Endothelial cell of umbilical vein (primary cell): ENCODE measurements at regions of chr5 and their contacts with region 1.

Region 1: GRCh38 chr5:81425569-81425968 is 31.6 kb upstream of the ACOT12 start:
- DNase-seq: peak; percentile 65
- H3K4me3 ChIP-seq: no peak overlapping the region
- H3K27ac ChIP-seq: no peak overlapping the region
- H3K4me1 ChIP-seq: peaks cover 36% of the 10 kb centered on the region
- H3K27me3 ChIP-seq: no peaks in the 10 kb centered on the region
- CTCF ChIP-seq: peak; percentile 26 to 32
- POLR2A ChIP-seq: no peak

Region 2: DNA sequence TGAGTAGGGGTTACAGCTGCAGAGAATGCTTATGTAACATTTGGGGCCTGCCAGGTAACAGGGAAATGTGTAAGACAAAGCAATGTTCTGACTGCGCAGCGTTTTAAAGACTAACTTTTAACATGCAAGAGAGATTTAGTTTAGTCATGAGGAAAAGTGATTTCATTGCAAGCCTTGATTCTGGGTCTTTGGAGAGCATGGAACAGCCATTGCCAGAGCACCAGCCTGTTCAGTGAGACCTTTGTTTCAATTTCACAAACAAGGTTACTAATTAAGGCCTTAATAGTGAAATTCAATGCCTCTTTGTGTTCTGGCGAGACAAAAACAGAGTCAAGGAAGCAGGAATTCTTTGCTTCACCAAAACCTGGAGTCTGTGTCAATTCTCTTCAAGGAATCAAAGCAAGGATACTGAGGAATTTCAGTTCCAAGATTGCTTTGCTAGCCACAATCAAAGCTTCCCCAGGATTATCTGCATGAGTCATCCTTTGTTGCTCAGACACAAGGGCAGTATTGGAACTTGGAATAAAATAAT is 178.1 kb before region 1 on chr5:
- CTCF ChIA-PET with region 1: no interaction called
- POLR2A ChIA-PET with region 1: no interaction called
- dilution Hi-C with region 1: no loop called
- intact Hi-C with region 1: no loop called
- DNase-seq: peak; percentile 31
- H3K4me3 ChIP-seq: no peak overlapping the region
- H3K27ac ChIP-seq: no peak overlapping the region
- H3K4me1 ChIP-seq: peaks cover 5% of the 10 kb centered on the region
- H3K27me3 ChIP-seq: no peaks in the 10 kb centered on the region
- CTCF ChIP-seq: no peak
- POLR2A ChIP-seq: no peak

Region 3: GRCh38 chr5:81345411-81346003 is 80.1 kb before region 1 on chr5:
- CTCF ChIA-PET with region 1: no interaction called
- POLR2A ChIA-PET with region 1: no interaction called
- dilution Hi-C with region 1: no loop called
- intact Hi-C with region 1: no loop called
- DNase-seq: no peak
- H3K4me3 ChIP-seq: no peak overlapping the region
- H3K27ac ChIP-seq: no peak overlapping the region
- H3K4me1 ChIP-seq: no peaks in the 10 kb centered on the region
- H3K27me3 ChIP-seq: peaks cover 0 to 2% of the 10 kb centered on the region in 2 experiments
- CTCF ChIP-seq: no peak
- POLR2A ChIP-seq: no peak

Region 4: GRCh38 chr5:81405126-81405891 is 20.3 kb before region 1 on chr5:
- CTCF ChIA-PET with region 1: no interaction called
- POLR2A ChIA-PET with region 1: no interaction called
- dilution Hi-C with region 1: no loop called
- intact Hi-C with region 1: no loop called
- DNase-seq: no peak
- H3K4me3 ChIP-seq: no peak overlapping the region
- H3K27ac ChIP-seq: no peak overlapping the region
- H3K4me1 ChIP-seq: no peaks in the 10 kb centered on the region
- H3K27me3 ChIP-seq: no peaks in the 10 kb centered on the region
- CTCF ChIP-seq: no peak
- POLR2A ChIP-seq: no peak

Region 5: DNA sequence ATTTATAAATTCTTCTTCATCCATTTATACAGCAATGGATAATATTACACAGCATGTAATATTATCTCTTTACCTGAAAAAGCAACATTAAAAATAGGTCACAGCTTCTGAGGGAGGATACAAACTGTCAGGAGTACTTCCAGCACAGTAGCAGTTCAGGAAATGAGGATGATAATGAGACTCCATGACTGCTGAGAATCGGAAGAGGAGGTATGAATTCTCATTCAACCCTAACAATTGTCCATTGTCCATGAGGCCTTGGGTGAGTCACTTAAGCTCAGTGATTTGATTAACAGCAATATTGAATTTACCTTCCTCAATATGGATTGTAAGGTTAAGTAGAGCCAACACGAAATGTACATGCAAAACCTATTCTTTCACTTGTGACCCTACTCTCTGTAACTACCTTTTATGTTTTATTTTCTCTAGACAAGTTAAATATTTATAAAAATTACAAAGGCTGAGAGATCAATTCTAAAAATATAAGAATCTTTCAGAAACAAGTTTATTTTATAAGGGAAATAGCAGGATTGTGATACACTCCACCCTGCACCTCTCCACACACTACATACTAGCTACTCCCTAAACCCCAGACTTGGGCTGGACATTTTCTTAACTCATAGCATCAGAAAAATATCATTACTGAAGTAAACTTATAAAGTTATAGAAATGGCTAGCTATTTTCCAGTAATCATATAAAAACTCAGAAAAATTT is 127.4 kb after region 1 on chr5:
- CTCF ChIA-PET with region 1: interaction called, 4 read pairs
- POLR2A ChIA-PET with region 1: no interaction called
- dilution Hi-C with region 1: no loop called
- intact Hi-C with region 1: loop called (anchors 1 kb)
- DNase-seq: peak; percentile 85
- H3K4me3 ChIP-seq: peak overlapping the region in 1 of 3 experiments; percentile 18
- H3K27ac ChIP-seq: peak overlapping the region; percentile 79
- H3K4me1 ChIP-seq: peaks cover 28% of the 10 kb centered on the region
- H3K27me3 ChIP-seq: no peaks in the 10 kb centered on the region
- CTCF ChIP-seq: no peak
- POLR2A ChIP-seq: no peak

Region 6: DNA sequence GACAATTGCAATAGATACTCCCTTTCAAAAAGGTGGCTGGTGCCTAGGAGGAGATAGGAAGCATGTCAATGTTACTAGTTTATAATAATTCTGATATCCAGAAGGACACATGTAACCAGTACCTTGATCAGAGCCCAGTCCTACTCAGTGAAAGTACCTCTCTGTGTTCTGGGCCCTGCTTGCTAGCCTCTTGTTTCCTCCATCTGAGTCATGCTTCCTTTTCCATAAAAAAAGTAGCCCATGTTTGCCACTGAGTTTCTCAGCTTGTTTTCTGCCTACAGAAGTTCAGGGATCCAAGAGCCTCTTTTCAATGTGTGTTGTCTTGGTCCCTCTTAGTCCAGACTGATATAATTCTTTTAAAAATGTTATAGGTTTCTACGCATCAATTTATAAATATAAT is 176.3 kb after region 1 on chr5:
- CTCF ChIA-PET with region 1: no interaction called
- POLR2A ChIA-PET with region 1: no interaction called
- dilution Hi-C with region 1: no loop called
- intact Hi-C with region 1: no loop called
- DNase-seq: peak; percentile 84
- H3K4me3 ChIP-seq: no peak overlapping the region
- H3K27ac ChIP-seq: peak overlapping the region; percentile 57
- H3K4me1 ChIP-seq: peaks cover 16% of the 10 kb centered on the region
- H3K27me3 ChIP-seq: no peaks in the 10 kb centered on the region
- CTCF ChIP-seq: no peak
- POLR2A ChIP-seq: no peak

Region 7: DNA sequence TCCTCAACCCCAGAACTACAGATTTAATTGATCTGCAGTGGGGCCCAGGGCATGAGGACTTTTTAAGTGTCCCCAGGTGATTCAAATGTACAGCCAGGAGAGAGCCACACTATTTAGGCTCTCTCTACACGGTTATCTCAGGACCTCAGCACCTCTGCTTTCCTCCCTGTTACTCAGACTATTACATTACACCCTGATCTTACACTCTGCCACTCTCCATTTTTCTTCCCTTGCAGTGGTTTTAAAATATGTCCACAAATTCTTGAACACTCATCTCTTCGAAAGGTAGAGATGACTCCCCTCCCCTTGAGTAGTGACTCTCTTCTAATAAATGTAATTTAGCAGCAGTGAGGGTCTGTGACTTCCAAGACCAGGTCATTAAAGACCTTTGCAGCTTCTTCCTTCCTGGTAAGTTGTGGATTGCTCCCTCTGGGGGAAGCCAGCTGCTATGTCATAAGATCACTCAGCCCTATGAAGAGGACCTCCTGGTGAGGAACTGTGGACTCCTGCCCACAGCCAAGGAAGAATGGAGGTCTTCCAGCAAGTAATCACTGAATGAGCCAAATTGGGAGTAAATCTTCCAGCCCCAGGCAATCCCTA is 412.8 kb after region 1 on chr5:
- CTCF ChIA-PET with region 1: interaction called, 14 read pairs
- POLR2A ChIA-PET with region 1: no interaction called
- dilution Hi-C with region 1: no loop called
- intact Hi-C with region 1: loop called (anchors 5 kb)
- DNase-seq: peak; percentile 34
- H3K4me3 ChIP-seq: no peak overlapping the region
- H3K27ac ChIP-seq: no peak overlapping the region
- H3K4me1 ChIP-seq: no peaks in the 10 kb centered on the region
- H3K27me3 ChIP-seq: no peaks in the 10 kb centered on the region
- CTCF ChIP-seq: peak in 1 of 2 donors; percentile 46
- POLR2A ChIP-seq: no peak

Region 8: DNA sequence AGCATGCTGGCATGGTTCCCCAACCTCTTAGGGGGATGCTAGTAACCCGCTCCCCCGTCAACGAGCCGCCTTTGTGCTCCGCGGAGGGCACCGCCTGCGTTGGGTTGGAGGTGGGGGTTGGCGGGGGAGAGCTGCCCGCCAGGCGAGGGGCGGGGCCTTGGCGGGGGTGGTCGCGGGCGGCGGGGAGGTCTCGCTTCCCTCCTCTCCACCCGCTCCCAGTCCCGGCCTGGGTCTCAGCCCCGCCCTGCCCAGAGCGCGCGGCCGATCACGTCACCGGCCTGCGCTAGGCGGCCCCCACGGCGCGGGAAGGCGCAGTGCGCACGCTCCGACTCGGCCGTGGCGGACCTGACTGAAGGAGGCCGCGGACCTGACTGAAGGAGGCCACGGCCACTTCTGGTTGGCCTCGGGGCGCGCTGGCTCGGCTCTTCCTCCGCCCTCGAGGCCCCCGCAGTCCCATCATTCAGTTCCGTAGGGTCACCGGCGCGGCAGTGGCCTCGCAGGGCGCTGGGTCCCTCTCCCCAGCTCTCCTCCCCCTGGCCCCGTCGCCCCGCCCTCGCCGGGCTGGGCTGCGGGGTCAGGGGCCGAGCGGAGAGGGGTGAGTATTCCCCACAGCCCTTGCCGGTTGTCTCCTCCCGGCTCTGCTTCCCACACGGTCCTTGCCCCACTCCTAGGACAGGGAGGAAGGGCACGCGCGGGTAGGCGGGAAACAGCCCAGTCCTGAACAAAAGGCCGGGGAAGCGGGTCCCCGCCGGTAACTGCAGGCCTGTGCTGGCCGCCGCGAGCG is 546.3 kb after region 1 on chr5 and contains the start of gene ATG10:
- CTCF ChIA-PET with region 1: no interaction called
- POLR2A ChIA-PET with region 1: no interaction called
- dilution Hi-C with region 1: no loop called
- intact Hi-C with region 1: loop called (anchors 2 kb)
- DNase-seq: peak; percentile 96
- H3K4me3 ChIP-seq: peak within 1 kb of the TSS; percentile 64 to 89 (median 71)
- H3K27ac ChIP-seq: peak within 1 kb of the TSS; percentile 71
- H3K4me1 ChIP-seq: no peaks in the 10 kb centered on the region
- H3K27me3 ChIP-seq: no peaks in the 10 kb centered on the region
- CTCF ChIP-seq: no peak
- POLR2A ChIP-seq: peak; percentile 89
- total RNA-seq, gene ATG10: 3.9 and 5.9 TPM in 2 replicates

Region 9: DNA sequence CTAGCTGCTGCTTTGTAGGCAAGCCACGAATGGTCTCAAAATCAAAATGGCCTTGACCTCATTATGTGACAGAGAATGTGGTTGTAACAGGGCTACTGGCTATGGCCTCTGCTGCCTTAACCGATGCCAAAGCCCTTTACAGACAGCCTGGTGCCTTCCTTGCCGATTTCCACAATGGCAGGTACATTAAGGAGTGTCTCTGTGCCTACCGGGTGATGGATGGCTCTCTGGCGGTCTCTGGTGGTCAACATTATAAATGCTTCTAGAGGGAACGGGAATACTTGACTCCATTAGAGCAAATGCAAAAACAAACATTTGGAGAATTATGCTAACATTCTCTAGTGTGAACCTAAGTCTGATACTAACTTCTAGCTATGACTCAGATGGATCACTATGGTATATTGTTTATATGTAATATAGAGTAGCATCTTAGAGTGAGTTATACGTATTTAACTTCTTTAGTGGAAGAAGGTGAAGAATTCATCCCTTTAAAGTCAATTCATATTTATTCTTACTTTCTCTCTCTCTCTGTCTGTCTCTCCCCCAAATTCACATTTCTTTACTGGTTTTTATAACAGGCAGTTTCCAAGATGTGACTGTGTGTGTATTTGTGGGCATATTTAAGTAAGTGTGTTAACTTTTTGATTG is 800.1 kb after region 1 on chr5:
- CTCF ChIA-PET with region 1: interaction called, 7 read pairs
- POLR2A ChIA-PET with region 1: no interaction called
- dilution Hi-C with region 1: no loop called
- intact Hi-C with region 1: loop called (anchors 1 kb)
- DNase-seq: peak; percentile 78
- H3K4me3 ChIP-seq: no peak overlapping the region
- H3K27ac ChIP-seq: no peak overlapping the region
- H3K4me1 ChIP-seq: peaks cover 2% of the 10 kb centered on the region
- H3K27me3 ChIP-seq: no peaks in the 10 kb centered on the region
- CTCF ChIP-seq: peak; percentile 66 to 85
- POLR2A ChIP-seq: no peak